ENCODE measurements at regions of chr1 and their contacts with region 1.

Region 1: DNA sequence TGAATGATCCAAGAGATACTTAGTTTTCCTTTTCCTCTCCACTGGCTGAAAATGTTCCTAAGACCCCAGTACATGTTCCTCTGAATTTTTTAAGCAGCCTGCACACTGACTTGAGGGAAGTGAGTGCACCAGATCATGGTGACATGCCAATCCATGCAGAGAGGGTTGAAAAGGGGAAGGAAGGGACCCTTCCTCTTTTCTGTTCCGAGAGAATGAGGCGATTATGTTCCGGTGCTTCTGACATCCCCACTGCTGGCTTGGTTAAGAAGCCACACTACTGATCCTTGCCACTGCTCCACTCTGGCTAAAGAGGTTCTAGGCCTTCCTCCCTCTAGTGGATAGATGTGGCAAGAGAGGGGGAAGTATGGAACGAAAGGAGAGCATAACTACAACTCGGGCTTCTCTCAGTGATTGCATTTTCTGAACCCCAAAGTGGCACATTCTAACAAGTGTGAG is 1.8 kb upstream of the CYB5R1 start:
- H3K4me3 Mint-ChIP-seq: peak overlapping the region; percentile 39
- H3K27ac Mint-ChIP-seq: peak overlapping the region; percentile 94
- H3K4me1 Mint-ChIP-seq: peaks cover 53% of the 10 kb centered on the region
- H3K27me3 Mint-ChIP-seq: no peaks in the 10 kb centered on the region

Region 2: GRCh38 chr1:202888531-202889360 is 80.1 kb before region 1 on chr1 and contains the start of gene RABIF:
- intact Hi-C with region 1: loop called (anchors 2 kb)
- H3K4me3 Mint-ChIP-seq: peak within 1 kb of the TSS; percentile 77
- H3K27ac Mint-ChIP-seq: peak within 1 kb of the TSS; percentile 93
- H3K4me1 Mint-ChIP-seq: peaks cover 15% of the 10 kb centered on the region
- H3K27me3 Mint-ChIP-seq: no peaks in the 10 kb centered on the region

Region 3: DNA sequence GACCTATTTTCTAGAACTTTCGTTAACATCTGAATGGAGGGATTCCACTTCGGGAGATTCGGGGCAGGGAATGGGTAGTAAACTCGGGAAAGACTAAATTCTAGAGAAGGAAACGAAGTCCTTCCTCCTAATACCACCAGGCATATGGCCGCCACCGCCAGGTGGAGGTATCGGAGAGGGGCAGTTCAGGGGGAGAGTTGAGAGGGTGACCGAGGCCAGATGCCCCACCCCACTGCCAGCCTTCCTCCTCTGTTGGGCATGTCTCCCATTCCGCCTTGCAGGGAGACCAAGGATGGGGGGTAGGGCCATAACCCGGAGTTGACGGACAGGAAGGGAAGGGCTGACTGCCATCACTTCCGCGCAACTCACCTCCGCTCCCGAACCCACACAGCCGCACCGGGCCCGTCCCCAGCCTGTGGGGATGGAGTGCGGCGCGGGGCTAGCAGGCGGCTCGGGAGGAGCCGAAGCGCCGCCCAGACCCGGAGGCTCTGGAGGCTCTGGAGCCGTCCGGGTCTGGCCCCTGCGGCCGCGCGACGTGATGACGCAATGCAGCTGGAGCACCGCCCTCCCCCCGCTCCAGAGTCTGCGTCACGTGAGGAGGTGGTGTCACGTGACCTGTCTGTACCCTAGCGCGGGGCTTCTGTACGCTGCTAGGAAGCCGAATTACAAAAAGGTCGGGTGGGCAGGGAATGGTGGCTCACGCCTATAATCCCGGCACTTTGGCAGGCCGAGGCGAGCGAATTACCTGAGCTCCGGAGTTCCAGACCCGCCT is 42.0 kb before region 1 on chr1 and contains the start of gene KLHL12:
- intact Hi-C with region 1: loop called (anchors 5 kb)
- H3K4me3 Mint-ChIP-seq: peak within 1 kb of the TSS; percentile 91
- H3K27ac Mint-ChIP-seq: peak within 1 kb of the TSS; percentile 95
- H3K4me1 Mint-ChIP-seq: peaks cover 40% of the 10 kb centered on the region
- H3K27me3 Mint-ChIP-seq: peaks cover 3% of the 10 kb centered on the region

Region 4: DNA sequence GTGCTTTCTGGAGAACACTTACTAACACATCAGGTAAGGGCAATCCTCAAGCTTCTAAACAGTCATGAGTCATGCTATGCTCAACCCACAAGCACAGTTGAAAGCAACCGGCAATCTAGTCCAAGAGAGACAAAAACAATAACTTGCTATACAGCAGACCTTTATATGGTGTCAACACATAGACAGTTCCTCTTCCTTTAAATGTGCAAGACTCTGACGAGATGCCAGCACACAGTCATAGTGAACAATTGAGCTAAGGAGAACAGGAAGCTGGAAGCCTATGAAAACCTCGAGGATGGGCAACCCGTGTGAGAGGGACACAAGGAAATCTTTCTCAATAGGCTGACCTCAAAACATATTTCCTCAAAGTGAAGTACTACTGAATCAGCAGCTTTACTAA is 16.1 kb before region 1 on chr1:
- intact Hi-C with region 1: loop called (anchors 1 kb)
- H3K4me3 Mint-ChIP-seq: peak overlapping the region; percentile 59
- H3K27ac Mint-ChIP-seq: peak overlapping the region; percentile 85
- H3K4me1 Mint-ChIP-seq: peaks cover 57% of the 10 kb centered on the region
- H3K27me3 Mint-ChIP-seq: no peaks in the 10 kb centered on the region

Region 5: GRCh38 chr1:202957733-202958543 is 10.9 kb before region 1 on chr1 and contains the start of gene ADIPOR1:
- intact Hi-C with region 1: loop called (anchors 1 kb)
- H3K4me3 Mint-ChIP-seq: peak within 1 kb of the TSS; percentile 86
- H3K27ac Mint-ChIP-seq: peak within 1 kb of the TSS; percentile 86
- H3K4me1 Mint-ChIP-seq: peaks cover 50% of the 10 kb centered on the region
- H3K27me3 Mint-ChIP-seq: no peaks in the 10 kb centered on the region

Region 6: GRCh38 chr1:203006948-203007871 is 38.3 kb after region 1 on chr1 and contains the start of gene TMEM183A:
- intact Hi-C with region 1: loop called (anchors 5 kb)
- H3K4me3 Mint-ChIP-seq: peak within 1 kb of the TSS; percentile 85
- H3K27ac Mint-ChIP-seq: peak within 1 kb of the TSS; percentile 95
- H3K4me1 Mint-ChIP-seq: peaks cover 40% of the 10 kb centered on the region
- H3K27me3 Mint-ChIP-seq: no peaks in the 10 kb centered on the region

Region 7: DNA sequence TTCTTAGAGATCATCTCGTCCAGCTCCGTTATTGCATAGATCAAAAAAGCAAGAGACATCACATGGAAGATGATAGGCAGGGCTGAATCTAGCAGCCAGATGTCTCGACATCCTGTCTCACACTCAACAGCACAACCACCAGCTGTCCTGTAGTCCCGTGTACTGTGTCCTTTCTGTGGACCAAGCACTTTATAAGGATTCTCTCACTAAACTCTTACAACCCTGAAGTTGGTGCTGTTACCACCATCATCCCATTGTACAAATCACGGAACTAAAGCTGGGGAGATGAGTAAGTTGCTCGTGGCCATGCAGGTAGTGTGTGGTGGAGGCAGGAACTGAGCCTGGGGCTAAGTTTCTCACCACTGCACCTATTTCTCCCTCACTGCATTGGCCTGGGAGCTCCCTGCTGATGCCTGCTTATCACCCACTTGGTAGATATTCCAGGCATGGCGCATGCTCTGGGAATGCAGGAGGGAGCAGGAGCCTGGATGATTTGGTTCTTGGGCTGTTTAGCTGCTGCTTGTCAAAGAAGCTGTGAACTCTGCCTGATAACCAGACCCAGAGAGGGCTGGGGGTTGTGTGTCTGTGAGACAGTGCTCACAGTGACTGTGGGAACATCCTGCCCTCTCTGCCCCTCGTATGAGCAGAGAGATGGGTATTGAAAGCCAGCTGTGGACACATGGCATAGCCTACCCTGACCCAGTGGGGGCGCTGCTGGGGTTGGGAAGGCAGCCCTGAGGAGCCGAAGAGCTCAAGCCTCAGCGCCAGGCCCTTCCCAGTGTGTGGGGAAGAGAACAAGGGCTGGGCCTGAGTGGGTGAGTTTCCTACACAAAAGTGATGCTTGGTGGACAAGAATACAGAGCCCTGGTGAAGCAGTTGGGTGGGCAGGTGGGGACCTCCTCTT is 71.0 kb after region 1 on chr1:
- intact Hi-C with region 1: no loop called
- H3K4me3 Mint-ChIP-seq: no peak overlapping the region
- H3K27ac Mint-ChIP-seq: no peak overlapping the region
- H3K4me1 Mint-ChIP-seq: peaks cover 16% of the 10 kb centered on the region
- H3K27me3 Mint-ChIP-seq: peaks cover 49% of the 10 kb centered on the region

Measured in dendritic cell treated with granulocyte-macrophage colony-stimulating factor and Interleukin-4, amounts not matched to agents 40 ng/mL and 50 ng/mL, for 4 days (primary cell).